ENCODE measurements at regions of chr2 and their contacts with region 1.

Region 1: GRCh38 chr2:27050281-27050995 is 1.0 kb upstream of the AGBL5 start:
- DNase-seq: peak; percentile 96
- ATAC-seq: peak; percentile 61
- H3K4me3 Mint-ChIP-seq: peak overlapping the region; percentile 80
- H3K27ac Mint-ChIP-seq: peak overlapping the region; percentile 94
- H3K4me1 Mint-ChIP-seq: peaks cover 20% of the 10 kb centered on the region
- H3K27me3 Mint-ChIP-seq: peaks cover 6% of the 10 kb centered on the region

Region 2: GRCh38 chr2:27032495-27033252 is 17.8 kb before region 1 on chr2 and contains the start of gene TMEM214:
- CTCF ChIA-PET with region 1: interaction called, 16 read pairs
- DNase-seq: peak; percentile 89
- ATAC-seq: peak; percentile 99
- H3K4me3 Mint-ChIP-seq: peak within 1 kb of the TSS; percentile 92
- H3K27ac Mint-ChIP-seq: peak within 1 kb of the TSS; percentile 87
- H3K4me1 Mint-ChIP-seq: peaks cover 59% of the 10 kb centered on the region
- H3K27me3 Mint-ChIP-seq: no peaks in the 10 kb centered on the region
- total RNA-seq, gene TMEM214: 68.7 to 86.6 TPM

Region 3: GRCh38 chr2:27071277-27071989 is 21.0 kb after region 1 on chr2 and contains the start of gene OST4:
- CTCF ChIA-PET with region 1: interaction called, 45 read pairs
- DNase-seq: peak; percentile 92
- ATAC-seq: peak; percentile 93
- H3K4me3 Mint-ChIP-seq: peak within 1 kb of the TSS; percentile 99
- H3K27ac Mint-ChIP-seq: peak within 1 kb of the TSS; percentile 93
- H3K4me1 Mint-ChIP-seq: peaks cover 70% of the 10 kb centered on the region
- H3K27me3 Mint-ChIP-seq: no peaks in the 10 kb centered on the region
- total RNA-seq, gene OST4: 248 to 318 TPM

Region 4: DNA sequence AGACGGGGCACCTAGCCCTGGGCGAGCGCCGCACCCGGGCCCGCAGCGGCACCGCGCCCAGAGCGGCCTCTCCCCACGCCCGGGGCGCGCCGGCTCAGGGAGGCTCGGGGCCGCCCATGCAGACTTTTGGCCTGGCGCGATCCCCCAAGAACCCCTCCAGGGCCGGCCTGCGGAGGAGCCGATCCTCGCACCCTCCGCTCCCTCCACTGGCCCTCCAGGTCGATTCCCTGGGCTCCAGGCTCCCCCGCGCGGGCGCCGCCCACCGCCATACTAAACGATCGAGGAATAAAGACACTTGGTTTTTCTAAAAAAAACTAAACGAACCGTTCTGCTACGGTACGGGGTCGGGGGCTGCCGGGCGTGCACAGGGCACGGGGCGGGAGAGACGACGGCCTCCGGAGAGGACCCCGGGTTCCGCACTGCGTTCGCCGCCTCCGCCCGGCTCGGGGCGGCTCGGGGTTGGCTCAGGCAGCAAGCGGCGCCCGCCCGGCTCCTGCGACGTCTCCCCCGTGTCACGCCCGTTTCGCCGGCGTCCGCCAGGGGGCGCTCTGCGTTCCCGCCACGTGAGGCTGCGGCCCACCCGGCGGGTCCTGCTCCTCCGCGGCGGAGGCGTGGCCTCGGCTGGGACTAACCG is 35.8 kb after region 1 on chr2:
- CTCF ChIA-PET with region 1: interaction called, 40 read pairs
- DNase-seq: peak; percentile 97
- ATAC-seq: peak; percentile 91
- H3K4me3 Mint-ChIP-seq: peak overlapping the region; percentile 78
- H3K27ac Mint-ChIP-seq: peak overlapping the region; percentile 85
- H3K4me1 Mint-ChIP-seq: peaks cover 31% of the 10 kb centered on the region
- H3K27me3 Mint-ChIP-seq: no peaks in the 10 kb centered on the region

Measured in activated CD8-positive, alpha-beta memory T cell treated with anti-CD3 and anti-CD28 coated beads, Interleukin-2, amount 10 ng/mL, durations not matched to agents 7 days and 5 days (primary cell).